Naive thymus-derived CD4-positive, alpha-beta T cell (primary cell): ENCODE measurements at regions of chr6 and their contacts with region 1.

Region 1: DNA sequence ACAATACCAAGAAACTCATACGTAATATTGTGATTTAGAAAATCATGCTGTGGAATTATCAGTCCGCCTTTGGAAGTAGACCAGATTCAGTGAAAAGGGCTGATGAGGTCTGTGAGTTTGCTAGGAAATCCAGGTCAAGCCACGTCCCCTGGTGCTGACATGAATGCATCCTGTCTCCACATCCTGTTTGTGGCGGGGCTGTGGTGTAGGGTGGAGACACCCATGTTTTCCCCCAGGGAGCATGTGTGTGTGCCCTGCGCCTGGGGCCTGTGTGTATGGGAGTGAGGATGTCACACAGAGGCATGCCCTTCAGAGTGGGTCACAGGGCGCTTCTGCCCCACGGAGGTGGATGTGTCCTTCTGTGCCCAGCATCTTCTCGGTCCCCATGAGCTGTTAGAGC is 109.1 kb downstream of the SASH1 start:
- DNase-seq: peak in 1 of 9 donors; percentile 45
- ATAC-seq: no peak
- H3K4me3 ChIP-seq: no peak overlapping the region
- H3K4me3 Mint-ChIP-seq: peak overlapping the region in 1 of 10 donors; percentile 69
- H3K27ac ChIP-seq: no peak overlapping the region
- H3K27ac Mint-ChIP-seq: peak overlapping the region in 1 of 9 donors; percentile 66
- H3K4me1 ChIP-seq: no peaks in the 10 kb centered on the region
- H3K4me1 Mint-ChIP-seq: peaks cover 0 to 27% (median 8%) of the 10 kb centered on the region in 7 donors
- H3K27me3 ChIP-seq: no peaks in the 10 kb centered on the region
- H3K27me3 Mint-ChIP-seq: peaks cover 16 to 49% (median 25%) of the 10 kb centered on the region in 5 donors

Region 2: GRCh38 chr6:148203970-148204369 is 247.7 kb before region 1 on chr6:
- CTCF ChIA-PET with region 1: no interaction called
- POLR2A ChIA-PET with region 1: no interaction called
- intact Hi-C with region 1: loop called in 1 of 2 experiments (anchors 5 kb)
- DNase-seq: peak in 8 of 9 donors; percentile 57 to 77 (median 68)
- ATAC-seq: peak; percentile 85
- H3K4me3 ChIP-seq: no peak overlapping the region
- H3K4me3 Mint-ChIP-seq: peak overlapping the region; percentile 6 to 77 (median 64)
- H3K27ac ChIP-seq: no peak overlapping the region
- H3K27ac Mint-ChIP-seq: peak overlapping the region in 7 of 9 donors; percentile 30 to 97 (median 80)
- H3K4me1 ChIP-seq: peaks cover 0 to 14% of the 10 kb centered on the region in 2 donors
- H3K4me1 Mint-ChIP-seq: peaks cover 25 to 61% (median 47%) of the 10 kb centered on the region in 7 donors
- H3K27me3 ChIP-seq: peaks cover 0 to 6% of the 10 kb centered on the region in 2 donors
- H3K27me3 Mint-ChIP-seq: peaks cover 47 to 88% (median 52%) of the 10 kb centered on the region in 5 donors